ENCODE measurements at regions of chr6 and their contacts with region 1.

Region 1: DNA sequence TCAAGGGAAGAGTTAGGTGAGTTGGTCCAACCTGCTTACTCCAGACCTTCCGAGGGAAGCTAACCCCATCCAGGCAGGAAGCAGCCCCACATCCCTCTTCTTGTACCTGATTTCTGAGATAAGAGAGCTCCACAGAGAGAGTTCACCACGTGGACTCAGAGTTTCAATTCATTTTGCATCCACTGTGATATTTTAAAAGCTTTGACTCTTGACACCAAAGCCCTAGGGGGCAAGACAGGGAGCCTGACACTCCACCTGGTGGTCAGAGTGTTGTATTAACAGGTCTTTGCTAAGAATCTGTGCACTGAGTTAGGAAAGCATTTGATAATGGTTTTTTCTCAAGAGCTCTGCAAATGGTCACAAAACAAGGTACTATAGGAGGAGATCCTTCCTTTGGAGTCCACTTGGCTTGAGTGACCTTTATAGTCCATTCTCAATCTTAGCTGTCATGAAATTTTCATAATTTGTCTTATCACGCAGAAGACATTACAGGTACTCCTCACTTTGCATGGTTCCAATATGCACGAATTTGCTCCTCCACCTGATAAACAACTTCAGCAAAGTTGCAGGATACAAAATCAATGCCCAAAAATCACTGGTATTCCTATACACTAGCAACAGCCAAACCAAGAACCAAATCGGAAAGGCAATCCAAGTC is 56.2 kb upstream of the RIPOR2 start:
- DNase-seq: peak; percentile 25
- ATAC-seq: peak; percentile 88
- H3K4me3 Mint-ChIP-seq: peak overlapping the region; percentile 55
- H3K27ac Mint-ChIP-seq: peak overlapping the region; percentile 74
- H3K4me1 Mint-ChIP-seq: peaks cover 83% of the 10 kb centered on the region
- H3K27me3 Mint-ChIP-seq: no peaks in the 10 kb centered on the region
- CTCF ChIP-seq: no peak

Region 2: GRCh38 chr6:24883618-24884017 is 108.3 kb before region 1 on chr6:
- CTCF ChIA-PET with region 1: interaction called, 16 read pairs
- POLR2A ChIA-PET with region 1: no interaction called
- intact Hi-C with region 1: no loop called
- DNase-seq: no peak
- ATAC-seq: peak; percentile 55
- H3K4me3 Mint-ChIP-seq: no peak overlapping the region
- H3K27ac Mint-ChIP-seq: peak overlapping the region; percentile 80
- H3K4me1 Mint-ChIP-seq: peaks cover 89% of the 10 kb centered on the region
- H3K27me3 Mint-ChIP-seq: no peaks in the 10 kb centered on the region
- CTCF ChIP-seq: no peak

Region 3: DNA sequence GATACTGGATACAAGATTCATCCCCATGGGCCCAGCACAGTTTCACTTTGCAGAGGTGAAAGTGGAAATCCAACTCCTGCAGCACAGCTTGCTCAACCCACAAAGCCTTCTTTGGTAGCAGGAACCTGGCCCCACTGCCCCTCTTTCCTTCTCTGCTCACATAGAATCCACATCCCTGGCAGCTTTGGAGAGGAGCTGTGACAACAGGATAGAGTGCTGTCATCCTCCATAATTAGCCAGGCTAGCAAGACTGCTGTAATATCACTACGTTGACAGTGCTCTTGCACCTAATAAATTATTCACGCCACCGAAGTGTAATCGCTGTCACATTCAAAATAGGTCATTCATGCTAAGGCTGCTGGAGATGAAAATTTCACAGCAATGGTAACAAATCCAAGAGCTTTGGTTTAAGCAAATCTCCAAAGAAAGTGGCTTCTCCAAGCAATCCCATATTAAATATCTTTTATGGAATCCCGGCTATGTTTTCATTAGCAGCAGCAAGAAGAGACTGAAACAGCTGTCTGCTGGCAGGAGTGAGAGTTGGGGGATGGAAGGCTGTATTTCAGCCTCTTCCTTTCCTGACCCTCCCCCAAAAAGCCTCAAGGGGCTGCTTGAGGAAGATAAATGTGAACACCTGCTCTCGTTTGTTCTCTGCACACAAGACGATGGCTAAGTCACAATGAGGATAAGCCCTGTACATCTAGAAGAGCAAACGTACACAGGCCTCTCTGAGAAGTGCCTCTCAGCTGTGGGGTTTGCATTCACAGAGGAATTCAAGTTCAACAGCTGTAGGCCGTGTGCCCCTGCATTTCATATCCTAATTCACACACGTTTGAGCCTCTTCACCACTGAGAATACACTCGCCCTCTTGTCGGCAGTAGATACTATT is 72.7 kb before region 1 on chr6:
- CTCF ChIA-PET with region 1: interaction called, 28 read pairs
- POLR2A ChIA-PET with region 1: interaction called, 5 read pairs
- intact Hi-C with region 1: no loop called
- DNase-seq: no peak
- ATAC-seq: peak; percentile 55
- H3K4me3 Mint-ChIP-seq: peak overlapping the region; percentile 61
- H3K27ac Mint-ChIP-seq: peak overlapping the region; percentile 88
- H3K4me1 Mint-ChIP-seq: peaks cover 96% of the 10 kb centered on the region
- H3K27me3 Mint-ChIP-seq: no peaks in the 10 kb centered on the region
- CTCF ChIP-seq: no peak

Region 4: DNA sequence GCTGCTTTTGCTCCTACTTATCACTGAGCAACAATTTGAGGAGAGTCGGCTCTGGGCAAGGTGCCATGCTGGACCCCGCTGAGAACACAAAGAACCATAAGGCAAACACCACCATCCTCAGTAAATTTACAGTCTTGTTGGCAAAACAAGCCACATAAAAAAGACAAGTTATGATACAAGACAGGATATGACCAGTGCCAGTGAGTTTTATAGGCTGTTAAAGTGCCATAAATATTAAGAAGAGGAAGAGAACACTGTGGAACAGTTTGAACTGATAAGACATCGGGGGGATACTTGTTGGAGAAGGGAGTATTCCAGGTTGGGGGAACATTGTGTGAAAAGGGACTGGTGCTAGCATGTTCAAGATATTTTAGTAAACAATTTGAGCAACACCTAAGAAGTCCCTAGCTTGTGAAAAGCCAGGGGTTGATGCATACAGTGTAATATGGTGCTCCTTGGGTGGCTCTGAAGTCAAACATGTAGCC is 30.9 kb before region 1 on chr6:
- CTCF ChIA-PET with region 1: interaction called, 9 read pairs
- POLR2A ChIA-PET with region 1: no interaction called
- intact Hi-C with region 1: loop called (anchors 2 kb)
- DNase-seq: no peak
- ATAC-seq: peak; percentile 14
- H3K4me3 Mint-ChIP-seq: no peak overlapping the region
- H3K27ac Mint-ChIP-seq: peak overlapping the region; percentile 33
- H3K4me1 Mint-ChIP-seq: peaks cover 90% of the 10 kb centered on the region
- H3K27me3 Mint-ChIP-seq: no peaks in the 10 kb centered on the region
- CTCF ChIP-seq: no peak

Region 5: DNA sequence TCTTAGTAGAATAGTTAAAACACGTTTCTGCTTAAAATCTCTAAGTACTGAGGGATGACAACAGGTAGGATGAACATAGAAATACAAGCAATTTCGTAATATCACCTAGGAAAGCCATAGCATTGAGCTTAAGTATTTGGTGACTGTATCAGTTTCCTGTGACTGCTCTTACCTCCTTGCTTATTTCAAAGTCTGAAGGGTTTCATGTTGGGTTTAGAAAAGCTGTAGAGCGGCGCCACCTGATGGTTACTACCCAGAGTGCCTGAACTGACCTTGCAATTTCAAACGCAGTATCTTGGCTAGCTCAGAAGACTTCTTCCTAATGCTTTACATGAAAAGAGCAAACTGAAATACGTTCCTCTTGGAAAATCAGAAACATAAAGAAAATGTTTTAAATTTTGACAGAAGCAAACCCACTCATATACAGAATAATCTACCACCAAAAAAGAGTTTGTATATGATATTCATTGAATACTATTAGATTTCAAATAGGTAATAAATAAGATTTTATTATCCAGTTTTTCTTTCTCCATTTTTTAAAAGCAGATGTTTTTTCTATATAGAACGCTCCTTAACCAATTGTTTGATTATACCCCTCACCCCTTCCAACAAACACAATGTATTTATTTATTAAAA is 26.1 kb after region 1 on chr6:
- CTCF ChIA-PET with region 1: interaction called, 16 read pairs
- POLR2A ChIA-PET with region 1: interaction called, 3 read pairs
- intact Hi-C with region 1: loop called (anchors 2 kb)
- DNase-seq: no peak
- ATAC-seq: peak; percentile 68
- H3K4me3 Mint-ChIP-seq: peak overlapping the region; percentile 32
- H3K27ac Mint-ChIP-seq: peak overlapping the region; percentile 70
- H3K4me1 Mint-ChIP-seq: peaks cover 56% of the 10 kb centered on the region
- H3K27me3 Mint-ChIP-seq: no peaks in the 10 kb centered on the region
- CTCF ChIP-seq: no peak

Region 6: GRCh38 chr6:25070547-25071366 is 78.8 kb after region 1 on chr6:
- CTCF ChIA-PET with region 1: interaction called, 32 read pairs
- POLR2A ChIA-PET with region 1: interaction called, 3 read pairs
- intact Hi-C with region 1: loop called (anchors 1 kb)
- DNase-seq: peak; percentile 63
- ATAC-seq: peak; percentile 94
- H3K4me3 Mint-ChIP-seq: peak overlapping the region; percentile 84
- H3K27ac Mint-ChIP-seq: peak overlapping the region; percentile 97
- H3K4me1 Mint-ChIP-seq: peaks cover 6% of the 10 kb centered on the region
- H3K27me3 Mint-ChIP-seq: no peaks in the 10 kb centered on the region
- CTCF ChIP-seq: peak; percentile 57

Measured in activated B cell treated with CpG ODN at 0.5 μM for 24 hours (primary cell).